ENCODE measurements at regions of chr3 and their contacts with region 1.

Region 1: DNA sequence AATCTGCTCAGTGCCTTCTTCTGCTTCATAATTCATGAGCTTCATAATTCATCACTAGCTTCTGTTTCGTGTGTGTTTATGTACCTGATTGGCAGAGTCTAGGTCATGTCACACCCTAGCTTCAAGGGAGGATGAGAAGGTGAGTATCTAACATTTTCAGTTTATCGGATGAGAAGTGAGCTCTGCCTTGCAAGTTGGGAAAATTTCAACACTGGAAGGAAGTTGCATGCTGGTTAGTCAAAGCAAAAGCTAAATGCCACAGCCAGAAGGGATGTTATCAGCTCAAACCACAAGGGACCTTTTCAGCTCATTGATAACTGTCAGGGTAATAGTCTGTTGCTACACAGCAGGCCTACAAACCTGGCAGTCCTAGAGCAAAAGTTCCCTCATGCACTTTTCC is 7.3 kb upstream of the TNFSF10 start:
- DNase-seq: peak; percentile 70
- ATAC-seq: peak; percentile 84
- H3K4me3 Mint-ChIP-seq: peak overlapping the region; percentile 42
- H3K27ac Mint-ChIP-seq: peak overlapping the region; percentile 88
- H3K4me1 Mint-ChIP-seq: peaks cover 56% of the 10 kb centered on the region
- H3K27me3 Mint-ChIP-seq: no peaks in the 10 kb centered on the region

Region 2: DNA sequence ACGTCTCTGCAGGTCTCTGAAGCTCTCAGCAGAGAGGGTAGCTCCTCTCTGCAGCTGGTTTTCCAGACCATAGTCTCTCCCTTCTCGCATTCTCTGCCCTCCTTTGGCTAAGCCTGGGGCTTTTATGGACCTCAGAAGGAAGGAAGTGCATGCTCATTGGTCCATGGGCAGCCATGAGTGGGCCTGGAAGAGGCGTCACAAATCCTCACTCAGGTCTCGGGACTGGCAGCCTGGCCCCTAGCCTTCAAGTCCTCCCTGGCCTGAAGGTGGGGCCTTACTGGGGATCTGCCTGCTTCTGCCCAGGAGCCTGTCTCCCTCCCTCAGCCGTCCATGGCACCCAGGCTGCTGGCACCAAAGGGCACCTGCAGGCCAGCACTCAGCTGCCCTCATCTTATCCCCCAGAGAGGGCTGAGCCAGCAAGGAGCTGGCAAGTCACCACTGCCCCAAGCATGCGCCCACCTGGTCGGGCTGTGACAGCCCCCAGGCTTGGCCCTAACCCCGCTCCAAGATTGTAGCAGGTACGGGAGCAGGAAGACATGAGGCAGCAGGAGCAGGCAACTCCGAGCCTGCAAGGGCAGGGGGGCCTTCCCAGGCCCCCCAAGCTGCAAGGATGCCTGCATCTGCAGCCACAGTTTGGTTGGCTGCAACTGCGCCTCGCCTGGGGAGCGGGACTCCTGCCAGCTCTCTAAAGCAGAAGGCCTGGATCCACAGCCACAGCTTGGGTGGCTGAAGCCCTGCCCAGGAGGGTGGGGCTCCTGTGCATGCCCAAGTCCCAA is 119.7 kb before region 1 on chr3:
- CTCF ChIA-PET with region 1: no interaction called
- DNase-seq: no peak
- ATAC-seq: no peak
- H3K4me3 Mint-ChIP-seq: no peak overlapping the region
- H3K27ac Mint-ChIP-seq: no peak overlapping the region
- H3K4me1 Mint-ChIP-seq: no peaks in the 10 kb centered on the region
- H3K27me3 Mint-ChIP-seq: peaks cover 18% of the 10 kb centered on the region

Region 3: DNA sequence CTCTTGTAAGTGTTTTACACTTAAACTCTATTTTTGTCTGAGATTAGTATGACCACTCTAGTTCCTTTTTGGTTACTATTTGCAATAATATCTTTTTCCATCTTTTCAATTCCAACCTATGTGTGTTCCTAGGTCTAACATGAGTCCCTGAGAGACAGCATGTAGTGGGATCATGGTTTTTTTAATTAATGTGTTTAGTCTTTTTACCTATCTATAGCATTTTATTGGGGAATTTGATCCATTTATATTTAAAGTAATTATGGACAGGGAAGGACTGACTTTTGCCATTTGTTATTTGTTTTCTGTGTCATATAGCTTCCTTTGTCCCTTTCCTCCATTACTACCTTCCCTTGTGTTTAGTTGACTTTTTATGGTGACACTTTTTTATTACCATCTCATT is 29.0 kb before region 1 on chr3:
- CTCF ChIA-PET with region 1: no interaction called
- DNase-seq: no peak
- ATAC-seq: no peak
- H3K4me3 Mint-ChIP-seq: no peak overlapping the region
- H3K27ac Mint-ChIP-seq: no peak overlapping the region
- H3K4me1 Mint-ChIP-seq: peaks cover 12% of the 10 kb centered on the region
- H3K27me3 Mint-ChIP-seq: no peaks in the 10 kb centered on the region

Region 4: DNA sequence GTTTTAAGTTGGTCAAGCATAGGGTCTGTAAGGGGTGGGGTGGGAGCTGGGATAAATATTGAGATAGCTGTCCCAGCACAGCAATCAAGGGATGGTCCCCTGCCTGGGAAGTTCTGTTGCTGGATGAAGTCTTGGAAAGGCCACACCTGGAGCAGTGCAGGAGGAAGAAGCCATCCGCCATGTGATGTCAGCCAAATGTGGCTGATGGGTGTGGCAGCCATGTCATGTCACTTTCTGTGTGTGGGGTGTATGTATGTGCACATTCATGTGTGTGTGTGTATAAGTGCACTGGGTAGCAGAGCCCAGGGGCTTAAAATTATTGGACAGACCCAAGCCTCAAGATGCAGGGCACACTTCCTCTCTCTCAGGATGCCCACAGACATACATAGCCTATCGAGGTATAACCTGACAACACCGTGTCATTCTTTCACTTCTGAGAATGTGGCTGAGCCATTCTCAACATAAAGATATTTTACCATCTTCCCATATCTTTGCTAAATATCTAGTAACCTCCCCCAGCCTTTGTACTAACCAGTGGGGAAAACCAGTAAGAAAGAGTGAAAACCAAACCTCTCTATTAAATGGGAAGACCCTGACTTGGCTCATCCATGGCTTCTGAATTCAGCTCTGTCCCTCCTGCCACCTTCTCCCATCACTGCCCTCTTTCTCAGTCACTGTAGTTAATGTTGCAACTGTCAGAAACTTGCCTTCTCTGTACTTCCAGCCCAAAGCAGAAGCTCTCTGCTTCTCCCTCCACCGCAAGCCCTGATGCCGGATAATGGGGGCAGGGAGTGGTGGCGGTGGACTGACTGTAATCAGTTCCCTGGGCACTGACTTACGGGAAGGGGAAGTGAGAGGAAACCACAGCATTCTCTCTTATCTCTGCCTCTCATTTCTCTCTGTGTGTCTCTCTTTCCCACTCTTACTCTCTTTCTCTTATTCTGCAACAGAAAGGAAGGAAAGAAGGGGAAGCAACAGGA is 18.5 kb before region 1 on chr3:
- CTCF ChIA-PET with region 1: interaction called, 10 read pairs
- DNase-seq: peak; percentile 81
- ATAC-seq: peak; percentile 63
- H3K4me3 Mint-ChIP-seq: peak overlapping the region; percentile 46
- H3K27ac Mint-ChIP-seq: peak overlapping the region; percentile 87
- H3K4me1 Mint-ChIP-seq: peaks cover 88% of the 10 kb centered on the region
- H3K27me3 Mint-ChIP-seq: no peaks in the 10 kb centered on the region

Region 5: GRCh38 chr3:172546628-172547214 is 16.2 kb after region 1 on chr3:
- CTCF ChIA-PET with region 1: interaction called, 21 read pairs
- DNase-seq: no peak
- ATAC-seq: no peak
- H3K4me3 Mint-ChIP-seq: no peak overlapping the region
- H3K27ac Mint-ChIP-seq: peak overlapping the region; percentile 76
- H3K4me1 Mint-ChIP-seq: peaks cover 59% of the 10 kb centered on the region
- H3K27me3 Mint-ChIP-seq: no peaks in the 10 kb centered on the region

Region 6: GRCh38 chr3:172622916-172623700 is 92.5 kb after region 1 on chr3:
- CTCF ChIA-PET with region 1: no interaction called
- DNase-seq: peak; percentile 52
- ATAC-seq: peak; percentile 65
- H3K4me3 Mint-ChIP-seq: peak overlapping the region; percentile 12
- H3K27ac Mint-ChIP-seq: no peak overlapping the region
- H3K4me1 Mint-ChIP-seq: peaks cover 7% of the 10 kb centered on the region
- H3K27me3 Mint-ChIP-seq: no peaks in the 10 kb centered on the region

Region 7: GRCh38 chr3:172787746-172788145 is 257.2 kb after region 1 on chr3:
- CTCF ChIA-PET with region 1: no interaction called
- DNase-seq: no peak
- ATAC-seq: no peak
- H3K4me3 Mint-ChIP-seq: no peak overlapping the region
- H3K27ac Mint-ChIP-seq: no peak overlapping the region
- H3K4me1 Mint-ChIP-seq: no peaks in the 10 kb centered on the region
- H3K27me3 Mint-ChIP-seq: no peaks in the 10 kb centered on the region